ENCODE measurements at regions of chr18 and their contacts with region 1.

Region 1: DNA sequence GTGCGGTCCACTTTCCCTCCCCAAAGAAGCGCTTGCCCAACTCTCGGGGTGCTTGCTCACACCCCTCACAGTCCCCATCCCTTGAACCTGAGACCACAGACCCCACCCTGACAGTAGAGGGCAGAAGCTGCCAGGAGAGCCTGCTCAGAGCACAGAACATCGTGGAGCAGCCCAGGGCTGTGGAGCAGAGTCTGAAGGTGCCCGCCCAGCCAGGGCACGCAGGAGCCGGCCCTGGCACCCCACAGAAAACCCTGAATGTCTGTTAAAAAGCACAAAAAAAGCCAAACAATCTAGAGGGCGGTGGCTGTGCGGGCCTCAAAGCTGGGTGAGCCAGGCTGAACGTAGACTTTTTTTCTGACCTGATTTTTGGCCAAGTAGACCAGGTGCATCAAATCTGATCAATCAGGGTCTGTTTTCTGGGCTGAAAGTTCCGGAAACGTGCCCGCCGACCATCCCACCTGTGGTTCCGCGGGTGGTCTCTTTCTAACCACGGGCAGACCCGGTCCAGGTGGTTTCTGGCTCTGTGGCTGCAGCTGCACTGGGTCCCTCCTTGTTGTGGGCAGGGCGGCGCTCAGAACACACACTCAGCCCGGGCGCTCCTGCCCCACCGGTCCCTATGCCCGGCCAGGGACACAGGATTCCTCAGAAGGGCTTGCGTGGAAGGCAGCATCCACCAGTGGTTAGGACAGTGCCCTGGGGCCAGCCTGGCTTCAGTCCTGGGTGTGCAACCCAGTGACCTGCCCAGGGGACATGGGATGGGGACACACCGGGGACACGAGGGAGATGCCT is 66.3 kb downstream of the SLC66A2 start:
- DNase-seq: peak in 1 of 5 donors; percentile 23
- ATAC-seq: no peak
- H3K4me3 ChIP-seq: no peak overlapping the region
- H3K27ac ChIP-seq: no peak overlapping the region
- H3K4me1 ChIP-seq: no peaks in the 10 kb centered on the region
- H3K27me3 ChIP-seq: no peaks in the 10 kb centered on the region
- CTCF ChIP-seq: no peak
- POLR2A ChIP-seq: no peak

Region 2: GRCh38 chr18:79944126-79944741 is 59.1 kb after region 1 on chr18:
- intact Hi-C with region 1: loop called in 1 of 10 experiments (anchors 10 kb)
- DNase-seq: no peak
- ATAC-seq: peak in 1 of 4 donors; percentile 15
- H3K4me3 ChIP-seq: no peak overlapping the region
- H3K27ac ChIP-seq: no peak overlapping the region
- H3K4me1 ChIP-seq: peaks cover 0 to 78% (median 43%) of the 10 kb centered on the region in 12 donors
- H3K27me3 ChIP-seq: no peaks in the 10 kb centered on the region
- CTCF ChIP-seq: no peak
- POLR2A ChIP-seq: no peak

Measured in heart left ventricle (tissue), 16 donors.